Ascending aorta (tissue), 2 donors: ENCODE measurements at regions of chr1 and their contacts with region 1.

Region 1: GRCh38 chr1:19715334-19716203 is 50.9 kb downstream of the HTR6 start:
- DNase-seq: peak; percentile 70 to 97
- H3K4me3 ChIP-seq: no peak overlapping the region
- H3K27ac ChIP-seq: no peak overlapping the region
- H3K4me1 ChIP-seq: peaks cover 0 to 5% of the 10 kb centered on the region in 2 donors
- H3K27me3 ChIP-seq: no peaks in the 10 kb centered on the region
- CTCF ChIP-seq: peak; percentile 83 to 90 (median 84)

Region 2: DNA sequence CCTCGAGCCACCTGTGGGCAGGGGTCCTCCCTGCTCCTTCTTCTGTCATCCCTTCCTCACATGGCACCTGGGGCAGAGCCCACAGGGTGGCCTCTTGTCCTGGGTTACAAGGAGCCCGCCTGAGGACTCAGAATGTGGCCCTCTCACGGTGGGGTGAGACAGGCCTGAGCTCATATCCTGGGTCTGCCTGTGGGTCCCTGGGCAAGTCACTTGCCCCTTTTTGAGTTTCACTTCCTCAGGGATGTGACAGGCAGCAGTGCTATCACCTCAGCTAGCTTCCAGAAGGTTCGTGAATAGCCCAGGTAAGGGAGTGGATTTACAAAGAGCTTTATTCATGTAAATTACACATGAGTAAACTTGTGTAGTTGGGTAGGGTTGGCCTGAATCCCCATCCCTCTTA is 17.4 kb before region 1 on chr1:
- intact Hi-C with region 1: no loop called
- DNase-seq: no peak
- H3K4me3 ChIP-seq: no peak overlapping the region
- H3K27ac ChIP-seq: no peak overlapping the region
- H3K4me1 ChIP-seq: no peaks in the 10 kb centered on the region
- H3K27me3 ChIP-seq: no peaks in the 10 kb centered on the region
- CTCF ChIP-seq: no peak

Region 3: GRCh38 chr1:19735440-19736127 is 20.0 kb after region 1 on chr1:
- intact Hi-C with region 1: no loop called
- DNase-seq: peak; percentile 76 to 92
- H3K4me3 ChIP-seq: no peak overlapping the region
- H3K27ac ChIP-seq: peak overlapping the region; percentile 85 to 95
- H3K4me1 ChIP-seq: peaks cover 8 to 35% of the 10 kb centered on the region in 2 donors
- H3K27me3 ChIP-seq: no peaks in the 10 kb centered on the region
- CTCF ChIP-seq: no peak

Region 4: GRCh38 chr1:19762175-19762779 is 46.7 kb after region 1 on chr1:
- intact Hi-C with region 1: loop called (anchors 5 kb)
- DNase-seq: no peak
- H3K4me3 ChIP-seq: no peak overlapping the region
- H3K27ac ChIP-seq: peak overlapping the region in 1 of 2 donors; percentile 10
- H3K4me1 ChIP-seq: peaks cover 6 to 9% of the 10 kb centered on the region in 2 donors
- H3K27me3 ChIP-seq: no peaks in the 10 kb centered on the region
- CTCF ChIP-seq: peak in 2 of 3 experiments; percentile 40 to 47

Region 5: DNA sequence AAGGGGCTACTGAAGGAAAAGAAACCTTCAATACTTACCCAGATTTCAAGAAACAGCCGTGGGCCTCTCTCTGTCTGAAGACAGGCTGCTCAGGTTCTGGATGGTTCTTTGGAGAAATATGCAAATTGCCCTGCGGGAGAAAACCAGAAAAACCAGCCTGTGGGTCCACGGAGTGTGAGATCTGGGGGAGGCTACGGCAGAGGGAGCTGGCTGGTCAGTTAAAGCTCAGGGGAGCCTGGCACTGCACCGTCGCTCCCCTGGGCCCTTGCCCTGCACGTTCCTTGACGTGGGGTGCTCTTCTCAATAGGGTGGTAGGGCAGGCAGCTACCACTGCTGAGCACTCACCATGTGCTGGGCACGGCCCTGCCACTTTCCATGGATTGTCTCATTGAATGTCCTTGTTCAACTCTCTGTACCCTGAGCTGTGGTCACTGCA is 71.4 kb after region 1 on chr1:
- intact Hi-C with region 1: no loop called
- DNase-seq: no peak
- H3K4me3 ChIP-seq: no peak overlapping the region
- H3K27ac ChIP-seq: no peak overlapping the region
- H3K4me1 ChIP-seq: no peaks in the 10 kb centered on the region
- H3K27me3 ChIP-seq: no peaks in the 10 kb centered on the region
- CTCF ChIP-seq: no peak

Region 6: GRCh38 chr1:19811206-19811851 is 95.8 kb after region 1 on chr1:
- intact Hi-C with region 1: loop called (anchors 1 kb)
- DNase-seq: no peak
- H3K4me3 ChIP-seq: no peak overlapping the region
- H3K27ac ChIP-seq: no peak overlapping the region
- H3K4me1 ChIP-seq: no peaks in the 10 kb centered on the region
- H3K27me3 ChIP-seq: no peaks in the 10 kb centered on the region
- CTCF ChIP-seq: peak; percentile 44 to 52 (median 45)

Region 7: GRCh38 chr1:19882111-19883071 is 166.8 kb after region 1 on chr1 and contains the start of gene OTUD3:
- intact Hi-C with region 1: loop called (anchors 2 kb)
- DNase-seq: peak; percentile 85 to 98
- H3K4me3 ChIP-seq: peak within 1 kb of the TSS; percentile 71 to 98
- H3K27ac ChIP-seq: peak within 1 kb of the TSS; percentile 88 to 92
- H3K4me1 ChIP-seq: peaks cover 6 to 16% of the 10 kb centered on the region in 2 donors
- H3K27me3 ChIP-seq: no peaks in the 10 kb centered on the region
- CTCF ChIP-seq: peak; percentile 84 to 91 (median 89)
- total RNA-seq, gene OTUD3: 1.9 TPM